HCT116 (cell line): ENCODE measurements at regions of chr5 and their contacts with region 1.

Region 1: DNA sequence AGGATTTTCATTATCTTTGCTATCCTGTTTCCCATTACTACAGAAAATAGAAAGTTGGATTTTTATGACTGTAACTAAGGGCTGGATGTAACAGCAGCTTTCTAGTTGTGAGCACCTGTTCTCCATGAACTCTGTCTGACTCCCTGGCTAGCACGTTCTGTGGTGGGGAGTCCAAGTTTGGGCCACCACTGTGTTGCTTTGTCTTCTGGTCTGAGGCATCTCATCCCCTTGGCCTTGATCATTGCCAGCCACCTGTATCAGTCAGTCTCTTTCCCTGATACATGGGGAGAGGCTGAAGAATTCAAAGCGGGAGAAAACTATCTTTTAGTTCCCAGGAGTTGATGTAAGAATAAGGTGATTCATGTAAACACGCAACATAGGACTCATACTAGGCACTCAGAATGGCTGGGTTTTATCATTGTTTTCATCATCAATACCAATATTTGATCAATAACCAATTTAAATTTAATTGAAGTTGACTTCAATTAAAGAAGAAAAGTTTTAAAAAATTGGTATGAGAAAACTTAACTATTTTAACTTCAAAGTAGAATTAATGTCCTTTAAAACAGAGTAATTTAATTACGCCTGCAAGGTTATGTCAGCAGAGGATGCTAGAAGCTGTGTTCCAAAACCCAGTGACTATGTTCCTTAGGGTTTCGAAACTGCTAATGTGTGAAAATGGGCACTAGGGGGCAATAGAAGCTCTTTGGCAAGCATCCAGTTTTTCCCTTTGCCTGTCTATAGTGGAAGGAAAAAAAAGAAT is 33.6 kb downstream of the WDR70 start:
- DNase-seq: peak; percentile 69
- ATAC-seq: peak; percentile 83
- H3K4me3 ChIP-seq: no peak overlapping the region
- H3K27ac ChIP-seq: no peak overlapping the region
- H3K4me1 ChIP-seq: peaks cover 10 to 12% of the 10 kb centered on the region in 2 experiments
- H3K27me3 ChIP-seq: no peaks in the 10 kb centered on the region
- CTCF ChIP-seq: peak; percentile 89 to 99 (median 97)
- POLR2A ChIP-seq: no peak
- RAD21 ChIP-seq: peak; percentile 90

Region 2: GRCh38 chr5:37604290-37604689 is 191.6 kb after region 1 on chr5:
- CTCF ChIA-PET with region 1: no interaction called
- POLR2A ChIA-PET with region 1: no interaction called
- RAD21 ChIA-PET with region 1: no interaction called
- intact Hi-C with region 1: no loop called
- DNase-seq: no peak
- ATAC-seq: no peak
- H3K4me3 ChIP-seq: no peak overlapping the region
- H3K27ac ChIP-seq: no peak overlapping the region
- H3K4me1 ChIP-seq: no peaks in the 10 kb centered on the region
- H3K27me3 ChIP-seq: no peaks in the 10 kb centered on the region
- CTCF ChIP-seq: no peak
- POLR2A ChIP-seq: no peak
- RAD21 ChIP-seq: no peak

Region 3: GRCh38 chr5:37837414-37838032 is 424.8 kb after region 1 on chr5:
- CTCF ChIA-PET with region 1: interaction called, 3 read pairs
- POLR2A ChIA-PET with region 1: no interaction called
- RAD21 ChIA-PET with region 1: no interaction called
- intact Hi-C with region 1: loop called (anchors 5 kb)
- DNase-seq: peak; percentile 18
- ATAC-seq: peak; percentile 92
- H3K4me3 ChIP-seq: no peak overlapping the region
- H3K27ac ChIP-seq: no peak overlapping the region
- H3K4me1 ChIP-seq: peaks cover 2 to 6% of the 10 kb centered on the region in 2 experiments; a peak in 2 of 4 replicates
- H3K27me3 ChIP-seq: no peaks in the 10 kb centered on the region
- CTCF ChIP-seq: peak; percentile 69 to 82 (median 70)
- POLR2A ChIP-seq: no peak
- RAD21 ChIP-seq: peak; percentile 89

Region 4: GRCh38 chr5:37871023-37871815 is 458.5 kb after region 1 on chr5:
- CTCF ChIA-PET with region 1: no interaction called
- POLR2A ChIA-PET with region 1: no interaction called
- RAD21 ChIA-PET with region 1: no interaction called
- intact Hi-C with region 1: no loop called
- DNase-seq: no peak
- ATAC-seq: no peak
- H3K4me3 ChIP-seq: no peak overlapping the region
- H3K27ac ChIP-seq: no peak overlapping the region
- H3K4me1 ChIP-seq: no peaks in the 10 kb centered on the region
- H3K27me3 ChIP-seq: no peaks in the 10 kb centered on the region
- CTCF ChIP-seq: no peak
- POLR2A ChIP-seq: no peak
- RAD21 ChIP-seq: no peak

Region 5: GRCh38 chr5:37900692-37901091 is 488.0 kb after region 1 on chr5:
- CTCF ChIA-PET with region 1: no interaction called
- POLR2A ChIA-PET with region 1: no interaction called
- RAD21 ChIA-PET with region 1: no interaction called
- intact Hi-C with region 1: loop called (anchors 1 kb)
- DNase-seq: peak; percentile 10
- ATAC-seq: peak; percentile 88
- H3K4me3 ChIP-seq: no peak overlapping the region
- H3K27ac ChIP-seq: no peak overlapping the region
- H3K4me1 ChIP-seq: no peaks in the 10 kb centered on the region
- H3K27me3 ChIP-seq: no peaks in the 10 kb centered on the region
- CTCF ChIP-seq: peak; percentile 17 to 32 (median 26); a peak in 2 of 6 replicates
- POLR2A ChIP-seq: no peak
- RAD21 ChIP-seq: peak; percentile 51